ENCODE measurements at regions of chr6 and their contacts with region 1.

Region 1: GRCh38 chr6:42661540-42662153 is 60.8 kb downstream of the PRPH2 start:
- DNase-seq: peak; percentile 86
- ATAC-seq: peak; percentile 80

Region 2: GRCh38 chr6:42726485-42727086 is 64.9 kb after region 1 on chr6:
- intact Hi-C with region 1: loop called (anchors 1 kb)
- DNase-seq: peak; percentile 84
- ATAC-seq: peak; percentile 95

Region 3: GRCh38 chr6:42890311-42891198 is 228.9 kb after region 1 on chr6:
- intact Hi-C with region 1: loop called (anchors 5 kb)
- DNase-seq: peak; percentile 94
- ATAC-seq: peak; percentile 99

Region 4: GRCh38 chr6:43105538-43106220 is 444.0 kb after region 1 on chr6:
- intact Hi-C with region 1: no loop called
- DNase-seq: no peak
- ATAC-seq: no peak